A673 (cell line): ENCODE measurements at regions of chr11 and their contacts with region 1.

Region 1: DNA sequence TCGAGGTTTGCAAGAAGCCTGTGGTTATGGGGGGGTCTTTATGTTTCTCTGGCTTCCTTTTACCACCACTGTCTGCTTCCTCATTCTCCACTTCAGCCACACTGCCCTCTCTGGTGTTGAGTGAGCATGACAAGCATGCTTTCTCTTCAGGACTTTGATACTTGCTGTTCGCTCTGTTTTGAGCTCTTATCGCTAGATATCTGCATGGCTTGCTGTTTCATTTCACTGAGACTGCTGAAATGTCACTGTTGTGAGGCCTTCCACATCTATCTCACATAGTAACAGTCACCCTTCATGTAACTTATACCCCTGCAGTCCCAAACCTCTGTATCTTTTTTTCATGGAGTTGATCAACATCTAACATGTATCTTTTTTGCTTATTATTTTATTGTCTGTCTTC is 59.8 kb downstream of the TMEM135 start:
- DNase-seq: peak; percentile 84
- H3K4me3 ChIP-seq: no peak overlapping the region
- H3K27ac ChIP-seq: peak overlapping the region; percentile 31
- H3K4me1 ChIP-seq: peaks cover 6% of the 10 kb centered on the region
- H3K27me3 ChIP-seq: no peaks in the 10 kb centered on the region
- CTCF ChIP-seq: peak; percentile 88

Region 2: GRCh38 chr11:86848861-86849260 is 248.7 kb before region 1 on chr11:
- CTCF ChIA-PET with region 1: interaction called, 12 read pairs
- POLR2A ChIA-PET with region 1: no interaction called
- intact Hi-C with region 1: no loop called
- DNase-seq: no peak
- H3K4me3 ChIP-seq: no peak overlapping the region
- H3K27ac ChIP-seq: no peak overlapping the region
- H3K4me1 ChIP-seq: no peaks in the 10 kb centered on the region
- H3K27me3 ChIP-seq: no peaks in the 10 kb centered on the region
- CTCF ChIP-seq: no peak

Region 3: DNA sequence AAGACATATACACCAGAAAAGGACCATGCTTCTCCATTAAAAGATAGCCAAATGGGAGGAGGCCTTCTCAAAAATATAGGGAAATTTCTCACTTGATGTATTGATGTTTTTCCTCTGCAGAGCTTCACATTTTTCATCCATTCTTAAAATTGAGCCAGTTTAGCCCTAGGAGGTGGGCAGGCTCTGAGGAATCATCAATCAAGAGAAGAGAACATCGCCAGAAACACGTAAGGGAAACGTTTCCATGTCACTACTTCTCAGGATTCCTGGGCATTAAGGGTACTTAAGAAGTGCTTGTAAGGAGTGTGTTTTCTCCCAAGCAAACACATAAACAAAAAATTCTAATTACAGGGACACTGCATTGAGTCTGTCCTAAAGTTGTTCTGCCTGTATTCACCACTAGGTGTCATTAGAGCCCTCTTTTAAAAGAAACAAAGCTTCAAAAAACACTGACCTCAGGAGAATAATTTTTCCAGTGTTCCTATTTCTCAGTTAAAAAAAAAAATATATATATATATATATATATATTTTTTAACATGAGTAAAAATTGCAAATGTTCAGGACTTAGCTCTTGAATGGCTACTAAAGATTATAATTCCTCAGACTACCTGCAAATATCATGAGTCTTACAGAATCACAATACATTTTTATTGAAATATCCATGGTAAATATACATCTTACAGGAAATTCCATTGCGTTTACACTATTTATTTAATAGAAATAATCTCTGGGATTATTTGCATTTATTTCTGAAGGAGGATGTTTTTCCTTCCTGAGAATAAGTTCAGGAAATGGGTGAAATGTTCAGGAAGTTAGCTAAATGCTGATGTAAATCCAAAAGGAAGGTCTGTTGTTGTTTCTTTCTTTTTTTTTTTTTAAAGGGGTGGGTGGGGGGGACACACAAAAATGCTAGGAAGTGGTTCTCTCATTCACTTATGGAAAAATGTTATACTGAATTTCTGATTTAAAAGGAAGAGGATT is 158.4 kb before region 1 on chr11:
- CTCF ChIA-PET with region 1: interaction called, 3 read pairs
- POLR2A ChIA-PET with region 1: no interaction called
- intact Hi-C with region 1: loop called (anchors 5 kb)
- DNase-seq: peak; percentile 90
- H3K4me3 ChIP-seq: peak overlapping the region; percentile 19
- H3K27ac ChIP-seq: peak overlapping the region; percentile 97
- H3K4me1 ChIP-seq: peaks cover 85% of the 10 kb centered on the region
- H3K27me3 ChIP-seq: no peaks in the 10 kb centered on the region
- CTCF ChIP-seq: peak; percentile 76

Region 4: GRCh38 chr11:87002918-87003317 is 94.7 kb before region 1 on chr11:
- CTCF ChIA-PET with region 1: no interaction called
- POLR2A ChIA-PET with region 1: no interaction called
- intact Hi-C with region 1: no loop called
- DNase-seq: no peak
- H3K4me3 ChIP-seq: no peak overlapping the region
- H3K27ac ChIP-seq: no peak overlapping the region
- H3K4me1 ChIP-seq: peaks cover 15% of the 10 kb centered on the region
- H3K27me3 ChIP-seq: no peaks in the 10 kb centered on the region
- CTCF ChIP-seq: no peak

Region 5: DNA sequence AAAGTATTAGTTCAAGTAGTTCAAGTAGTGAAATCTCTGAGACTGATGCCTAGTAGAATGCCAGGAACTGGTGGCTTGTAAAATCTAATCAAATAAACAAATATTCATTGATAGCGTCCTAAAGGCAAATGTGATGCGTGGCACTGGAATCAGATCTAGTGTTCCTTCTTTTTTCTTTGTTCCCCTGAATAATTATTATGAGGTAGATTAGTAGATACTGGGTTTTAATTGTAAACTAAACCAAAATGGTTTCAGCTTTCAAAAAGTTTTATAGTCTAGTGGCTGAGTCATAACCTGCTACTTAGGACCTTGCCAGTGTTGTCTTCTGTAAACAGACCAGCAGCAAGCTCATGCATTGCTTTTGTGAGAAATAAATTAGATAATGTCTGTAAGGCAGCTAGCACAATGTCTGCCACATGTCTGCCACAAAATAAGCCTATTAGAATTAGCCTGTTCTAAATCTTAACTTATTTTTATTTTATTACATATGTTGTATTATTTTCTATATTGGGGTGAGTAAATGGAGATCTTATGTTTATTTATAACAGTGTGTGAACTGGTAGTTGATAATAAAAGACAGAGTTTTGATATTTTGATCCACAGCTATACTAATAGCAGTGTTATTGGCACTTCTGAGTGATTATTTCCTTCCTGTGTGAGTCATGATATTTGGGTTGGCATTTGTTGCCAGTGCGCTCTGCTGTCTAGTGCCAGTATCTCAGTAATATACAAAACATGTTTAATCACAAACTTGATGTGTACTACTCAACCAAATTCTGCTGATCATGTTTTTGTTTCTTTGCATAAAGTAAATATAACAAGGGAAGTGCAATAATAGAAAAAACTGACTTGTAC is 75.8 kb after region 1 on chr11:
- CTCF ChIA-PET with region 1: interaction called, 3 read pairs
- POLR2A ChIA-PET with region 1: interaction called, 3 read pairs
- intact Hi-C with region 1: loop called (anchors 5 kb)
- DNase-seq: peak; percentile 94
- H3K4me3 ChIP-seq: no peak overlapping the region
- H3K27ac ChIP-seq: peak overlapping the region; percentile 71
- H3K4me1 ChIP-seq: peaks cover 41% of the 10 kb centered on the region
- H3K27me3 ChIP-seq: no peaks in the 10 kb centered on the region
- CTCF ChIP-seq: no peak

Region 6: DNA sequence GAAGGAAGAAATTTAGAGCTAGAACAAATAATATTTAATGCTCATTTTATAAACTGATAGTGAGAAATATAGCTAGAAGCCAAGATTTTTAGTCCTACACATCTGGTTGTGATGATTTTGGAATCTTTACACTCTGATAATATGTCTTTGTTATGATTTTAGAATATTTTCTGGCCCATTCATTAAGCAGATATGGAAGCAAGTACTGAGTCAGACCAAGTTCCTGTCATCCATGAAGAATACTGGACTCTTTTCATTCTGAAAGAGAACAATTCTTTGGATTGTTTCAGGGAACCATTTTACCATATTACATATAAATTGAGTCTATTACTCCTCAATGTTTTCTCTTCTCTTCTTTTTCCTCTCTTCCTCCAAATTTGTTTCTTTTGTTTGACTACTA is 167.6 kb after region 1 on chr11:
- CTCF ChIA-PET with region 1: no interaction called
- POLR2A ChIA-PET with region 1: no interaction called
- intact Hi-C with region 1: no loop called
- DNase-seq: no peak
- H3K4me3 ChIP-seq: no peak overlapping the region
- H3K27ac ChIP-seq: peak overlapping the region; percentile 8
- H3K4me1 ChIP-seq: peaks cover 70% of the 10 kb centered on the region
- H3K27me3 ChIP-seq: no peaks in the 10 kb centered on the region
- CTCF ChIP-seq: no peak

Region 7: GRCh38 chr11:87281496-87281895 is 183.9 kb after region 1 on chr11:
- CTCF ChIA-PET with region 1: no interaction called
- POLR2A ChIA-PET with region 1: no interaction called
- intact Hi-C with region 1: loop called (anchors 5 kb)
- DNase-seq: peak; percentile 82
- H3K4me3 ChIP-seq: no peak overlapping the region
- H3K27ac ChIP-seq: peak overlapping the region; percentile 74
- H3K4me1 ChIP-seq: peaks cover 38% of the 10 kb centered on the region
- H3K27me3 ChIP-seq: no peaks in the 10 kb centered on the region
- CTCF ChIP-seq: peak; percentile 57

Region 8: GRCh38 chr11:87421422-87421821 is 323.8 kb after region 1 on chr11:
- CTCF ChIA-PET with region 1: no interaction called
- POLR2A ChIA-PET with region 1: no interaction called
- intact Hi-C with region 1: loop called (anchors 5 kb)
- DNase-seq: peak; percentile 90
- H3K4me3 ChIP-seq: no peak overlapping the region
- H3K27ac ChIP-seq: no peak overlapping the region
- H3K4me1 ChIP-seq: no peaks in the 10 kb centered on the region
- H3K27me3 ChIP-seq: no peaks in the 10 kb centered on the region
- CTCF ChIP-seq: peak; percentile 80